Heart right ventricle (tissue), 16 donors: ENCODE measurements at regions of chr14 and their contacts with region 1.

Region 1: GRCh38 chr14:64986578-64987571 is at the start of gene FNTB:
- DNase-seq: peak; percentile 96
- ATAC-seq: peak; percentile 98 to 99 (median 98)
- H3K4me3 ChIP-seq: peak within 1 kb of the TSS; percentile 54 to 94 (median 80)
- H3K27ac ChIP-seq: peak within 1 kb of the TSS; percentile 9 to 94 (median 87)
- H3K4me1 ChIP-seq: peaks cover 5 to 44% (median 20%) of the 10 kb centered on the region in 9 donors
- H3K27me3 ChIP-seq: no peaks in the 10 kb centered on the region
- CTCF ChIP-seq: peak; percentile 55 to 97 (median 83)
- total RNA-seq, gene FNTB: 14.6 to 20.8 (median 16.9) TPM

Region 2: GRCh38 chr14:64914237-64914971 is 72.5 kb before region 1 on chr14 and contains the start of gene CHURC1:
- intact Hi-C with region 1: loop called in 4 of 10 experiments (anchors 2 to 10 kb)
- DNase-seq: peak; percentile 97 to 99
- ATAC-seq: peak; percentile 98 to 100 (median 99)
- H3K4me3 ChIP-seq: peak within 1 kb of the TSS; percentile 71 to 99 (median 90)
- H3K27ac ChIP-seq: peak within 1 kb of the TSS; percentile 64 to 99 (median 94)
- H3K4me1 ChIP-seq: peaks cover 8 to 57% (median 35%) of the 10 kb centered on the region in 9 donors
- H3K27me3 ChIP-seq: peaks cover 0 to 2% (median 0%) of the 10 kb centered on the region in 7 donors
- CTCF ChIP-seq: no peak
- total RNA-seq, gene CHURC1: 59.2 to 98.8 (median 76.3) TPM

Region 3: DNA sequence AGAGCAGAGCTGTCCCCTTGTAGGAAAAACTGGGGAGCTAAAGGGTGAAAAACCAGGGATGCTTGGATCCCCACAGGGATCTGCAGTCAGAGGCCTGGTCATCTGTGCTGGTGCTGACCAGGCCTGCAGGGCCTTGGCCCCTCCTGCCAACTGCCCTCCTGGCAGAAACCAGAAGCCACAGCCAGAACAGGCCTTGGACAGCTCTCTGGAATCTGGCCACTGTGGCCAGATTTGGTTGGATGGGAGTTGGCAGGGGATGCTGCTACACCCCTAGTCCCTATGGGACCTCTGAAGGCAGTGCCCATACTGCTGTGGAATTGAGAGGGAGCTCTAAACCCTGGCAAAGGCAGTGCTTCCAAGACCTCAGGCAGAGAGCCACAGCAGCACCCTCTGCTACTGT is 35.2 kb before region 1 on chr14:
- intact Hi-C with region 1: loop called in 1 of 10 experiments (anchors 2 kb)
- DNase-seq: peak; percentile 23 to 37
- ATAC-seq: peak; percentile 4 to 69 (median 48)
- H3K4me3 ChIP-seq: no peak overlapping the region
- H3K27ac ChIP-seq: peak overlapping the region; percentile 47 to 96 (median 82)
- H3K4me1 ChIP-seq: peaks cover 0 to 56% (median 23%) of the 10 kb centered on the region in 9 donors
- H3K27me3 ChIP-seq: no peaks in the 10 kb centered on the region
- CTCF ChIP-seq: no peak

Region 4: DNA sequence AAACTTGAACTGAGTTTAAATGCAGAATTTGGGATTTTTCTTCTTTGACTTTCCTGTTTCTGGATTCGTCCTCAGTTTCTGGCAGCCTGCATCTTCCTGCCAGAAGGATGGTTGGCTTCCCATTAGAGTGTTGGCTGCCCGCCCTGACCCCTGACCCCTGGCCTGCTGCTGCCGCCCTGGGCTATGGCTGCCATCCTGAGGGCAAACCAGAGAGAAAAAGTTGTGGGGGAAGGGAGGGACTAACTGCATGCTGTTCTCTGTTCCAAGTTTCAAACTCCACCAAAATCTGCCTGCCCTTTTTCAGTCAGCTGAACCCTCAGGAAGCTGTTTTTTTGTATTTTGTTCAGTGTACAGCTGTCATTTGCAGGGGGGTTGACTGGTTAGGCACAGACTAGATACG is 48.2 kb after region 1 on chr14:
- intact Hi-C with region 1: no loop called
- DNase-seq: peak; percentile 40 to 69
- ATAC-seq: peak in 6 of 8 donors; percentile 17 to 50 (median 32)
- H3K4me3 ChIP-seq: no peak overlapping the region
- H3K27ac ChIP-seq: peak overlapping the region in 4 of 10 donors; percentile 5 to 60 (median 39)
- H3K4me1 ChIP-seq: peaks cover 0 to 30% (median 13%) of the 10 kb centered on the region in 9 donors
- H3K27me3 ChIP-seq: no peaks in the 10 kb centered on the region
- CTCF ChIP-seq: no peak

Region 5: GRCh38 chr14:65095619-65096205 is 108.8 kb after region 1 on chr14:
- intact Hi-C with region 1: loop called in 4 of 10 experiments (anchors 2 to 10 kb)
- DNase-seq: peak; percentile 32 to 76
- ATAC-seq: peak; percentile 71 to 87 (median 82)
- H3K4me3 ChIP-seq: peak overlapping the region in 1 of 10 donors; percentile 1
- H3K27ac ChIP-seq: peak overlapping the region in 9 of 10 donors; percentile 35 to 79 (median 56)
- H3K4me1 ChIP-seq: peaks cover 28 to 100% (median 96%) of the 10 kb centered on the region in 9 donors
- H3K27me3 ChIP-seq: no peaks in the 10 kb centered on the region
- CTCF ChIP-seq: no peak

Region 6: DNA sequence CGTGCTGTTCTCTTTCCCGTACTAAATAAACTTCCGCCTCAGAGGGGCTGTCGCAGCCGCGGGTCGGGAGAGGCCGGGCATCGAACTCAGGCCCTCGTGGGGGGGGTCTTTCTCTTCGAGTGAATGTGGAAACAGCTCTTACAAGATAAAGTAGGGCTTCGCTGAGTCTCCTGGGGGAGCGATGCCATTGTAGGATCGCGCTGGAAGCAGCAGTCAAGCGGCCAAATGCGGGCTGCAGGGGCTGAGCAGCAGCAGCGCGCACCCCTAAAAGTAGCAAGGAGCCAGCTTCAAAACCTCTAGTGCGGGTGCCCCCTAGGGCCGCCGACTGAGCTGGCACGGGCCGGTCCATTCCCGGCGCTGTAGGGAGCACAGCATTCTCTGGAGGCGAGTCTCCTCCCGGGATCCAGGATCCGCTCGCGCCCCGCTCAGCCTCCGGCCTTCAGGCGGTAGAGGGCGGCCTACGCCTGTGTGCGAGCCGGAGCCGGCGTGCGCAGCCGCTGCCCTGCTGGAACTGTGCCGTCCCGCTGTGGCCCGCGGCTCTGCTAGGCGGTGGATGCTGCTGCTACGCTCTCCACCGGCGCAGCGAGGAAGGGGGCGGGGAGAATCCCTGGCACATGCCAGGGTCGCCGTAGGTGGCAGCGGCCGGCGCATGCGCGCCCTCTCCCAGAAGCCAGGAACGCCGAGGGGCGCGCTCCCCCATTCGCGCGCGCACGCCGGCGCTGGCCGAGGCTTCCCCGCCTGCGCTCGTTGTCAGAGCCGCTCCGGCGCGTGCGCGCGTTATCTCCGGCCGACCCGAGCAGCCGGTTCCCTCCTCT is 425.4 kb after region 1 on chr14 and contains the start of gene FUT8:
- intact Hi-C with region 1: loop called in 1 of 10 experiments (anchors 5 kb)
- DNase-seq: peak; percentile 94 to 96
- ATAC-seq: peak; percentile 90 to 98 (median 94)
- H3K4me3 ChIP-seq: peak within 1 kb of the TSS; percentile 60 to 94 (median 86)
- H3K27ac ChIP-seq: peak within 1 kb of the TSS; percentile 77 to 98 (median 92)
- H3K4me1 ChIP-seq: peaks cover 0 to 24% (median 12%) of the 10 kb centered on the region in 9 donors
- H3K27me3 ChIP-seq: no peaks in the 10 kb centered on the region
- CTCF ChIP-seq: peak; percentile 38 to 76 (median 59)
- total RNA-seq, gene FUT8: 8.3 to 16.1 (median 11.0) TPM

Region 7: GRCh38 chr14:65910108-65910786 is 923.4 kb after region 1 on chr14:
- intact Hi-C with region 1: no loop called
- DNase-seq: no peak
- ATAC-seq: no peak
- H3K4me3 ChIP-seq: no peak overlapping the region
- H3K27ac ChIP-seq: no peak overlapping the region
- H3K4me1 ChIP-seq: no peaks in the 10 kb centered on the region
- H3K27me3 ChIP-seq: peaks cover 0 to 20% (median 3%) of the 10 kb centered on the region in 7 donors
- CTCF ChIP-seq: no peak